CD8-positive, alpha-beta T cell (primary cell): ENCODE measurements at regions of chr5 and their contacts with region 1.

Region 1: DNA sequence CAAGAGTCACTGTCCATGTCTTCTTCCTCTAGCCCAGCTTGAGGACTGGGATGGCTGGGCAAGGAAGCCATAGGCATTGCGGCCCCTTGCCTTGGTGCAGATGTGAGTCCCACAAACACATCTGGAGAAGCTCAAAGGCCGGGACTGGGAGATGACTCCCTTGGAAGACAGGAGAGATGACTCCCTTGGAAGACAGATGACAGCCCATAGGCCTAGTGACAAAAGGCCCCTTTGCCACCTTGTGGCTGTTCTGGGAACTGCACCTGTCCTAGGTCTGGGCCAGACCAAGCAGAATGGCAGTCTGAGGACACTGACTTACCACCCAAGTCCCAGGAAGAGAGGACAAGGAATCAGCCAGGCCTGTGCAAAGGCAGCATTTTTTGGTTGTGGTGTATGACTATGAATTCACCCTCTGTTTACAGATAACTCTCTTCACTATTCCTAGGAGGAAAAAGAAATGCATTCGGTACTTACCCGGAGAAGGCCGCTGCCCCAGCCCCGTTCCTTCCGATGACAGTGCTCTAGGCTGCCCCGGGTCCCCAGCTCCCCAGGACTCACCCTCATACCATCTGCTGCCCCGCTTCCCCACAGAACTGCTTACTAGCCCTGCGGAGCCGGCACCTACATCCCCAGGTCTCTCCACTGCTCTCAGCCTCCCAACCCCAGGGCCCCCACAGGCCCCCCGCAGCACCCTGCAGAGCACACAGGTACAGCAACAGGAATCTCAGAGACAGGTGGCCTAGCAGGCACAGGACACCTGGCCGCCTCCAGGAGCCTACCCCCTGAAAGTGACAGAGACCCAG is 30.8 kb downstream of the SKP1 start:
- DNase-seq: peak; percentile 73 to 91 (median 84)
- ATAC-seq: peak; percentile 72
- H3K4me3 ChIP-seq: no peak overlapping the region
- H3K4me3 Mint-ChIP-seq: no peak overlapping the region
- H3K27ac ChIP-seq: peak overlapping the region in 1 of 2 experiments; percentile 37
- H3K27ac Mint-ChIP-seq: peak overlapping the region; percentile 83
- H3K4me1 ChIP-seq: peaks cover 22% of the 10 kb centered on the region
- H3K4me1 Mint-ChIP-seq: peaks cover 69% of the 10 kb centered on the region
- H3K27me3 ChIP-seq: no peaks in the 10 kb centered on the region
- H3K27me3 Mint-ChIP-seq: no peaks in the 10 kb centered on the region
- CTCF ChIP-seq: peak; percentile 86

Region 2: DNA sequence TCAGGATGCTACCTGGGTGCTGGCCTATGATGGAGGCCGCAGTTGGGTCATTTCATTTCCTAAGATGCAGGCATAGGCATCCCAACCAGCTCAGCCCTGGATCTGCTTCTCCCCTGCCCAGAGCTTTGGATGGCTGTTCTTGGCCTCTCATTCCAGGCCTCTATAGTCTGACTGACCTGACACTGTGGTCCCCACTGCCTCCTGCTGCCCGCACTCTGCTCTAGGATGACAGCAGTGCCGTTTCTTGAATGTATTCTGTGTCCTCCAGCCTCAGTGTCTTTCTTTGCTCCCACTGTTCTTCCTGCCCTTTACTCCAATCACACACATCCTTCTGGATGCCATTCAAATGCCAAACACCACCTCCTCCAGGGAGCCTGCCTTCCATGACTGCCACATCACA is 858.5 kb before region 1 on chr5:
- CTCF ChIA-PET with region 1: no interaction called
- POLR2A ChIA-PET with region 1: no interaction called
- intact Hi-C with region 1: no loop called
- DNase-seq: peak; percentile 5 to 70 (median 45)
- ATAC-seq: no peak
- H3K4me3 ChIP-seq: no peak overlapping the region
- H3K4me3 Mint-ChIP-seq: no peak overlapping the region
- H3K27ac ChIP-seq: no peak overlapping the region
- H3K27ac Mint-ChIP-seq: no peak overlapping the region
- H3K4me1 ChIP-seq: no peaks in the 10 kb centered on the region
- H3K4me1 Mint-ChIP-seq: no peaks in the 10 kb centered on the region
- H3K27me3 ChIP-seq: no peaks in the 10 kb centered on the region
- H3K27me3 Mint-ChIP-seq: no peaks in the 10 kb centered on the region
- CTCF ChIP-seq: peak; percentile 25

Region 3: DNA sequence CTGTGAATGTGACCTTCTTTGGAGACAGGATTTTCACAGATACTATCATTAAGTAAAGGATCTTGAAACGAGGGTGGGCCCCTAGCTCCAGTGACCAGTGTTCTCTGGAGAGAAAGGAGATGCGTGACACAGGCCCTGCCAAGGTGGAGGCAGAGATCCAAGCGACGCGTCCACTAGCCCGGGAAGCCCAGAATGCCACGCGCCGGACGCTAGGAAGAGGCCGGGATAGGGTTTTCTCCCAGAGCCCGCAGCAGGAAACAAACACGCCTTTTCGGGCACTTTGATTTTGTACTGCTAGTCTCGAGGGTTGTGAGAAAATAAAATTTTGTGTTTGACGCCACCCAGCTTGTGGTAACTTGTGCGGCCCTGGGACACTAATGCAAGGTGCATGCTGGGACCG is 111.7 kb before region 1 on chr5:
- CTCF ChIA-PET with region 1: interaction called, 773 read pairs
- POLR2A ChIA-PET with region 1: interaction called, 185 read pairs
- intact Hi-C with region 1: loop called (anchors 1 kb)
- DNase-seq: no peak
- ATAC-seq: no peak
- H3K4me3 ChIP-seq: no peak overlapping the region
- H3K4me3 Mint-ChIP-seq: no peak overlapping the region
- H3K27ac ChIP-seq: no peak overlapping the region
- H3K27ac Mint-ChIP-seq: no peak overlapping the region
- H3K4me1 ChIP-seq: peaks cover 8% of the 10 kb centered on the region
- H3K4me1 Mint-ChIP-seq: peaks cover 15% of the 10 kb centered on the region
- H3K27me3 ChIP-seq: no peaks in the 10 kb centered on the region
- H3K27me3 Mint-ChIP-seq: no peaks in the 10 kb centered on the region
- CTCF ChIP-seq: no peak

Region 4: DNA sequence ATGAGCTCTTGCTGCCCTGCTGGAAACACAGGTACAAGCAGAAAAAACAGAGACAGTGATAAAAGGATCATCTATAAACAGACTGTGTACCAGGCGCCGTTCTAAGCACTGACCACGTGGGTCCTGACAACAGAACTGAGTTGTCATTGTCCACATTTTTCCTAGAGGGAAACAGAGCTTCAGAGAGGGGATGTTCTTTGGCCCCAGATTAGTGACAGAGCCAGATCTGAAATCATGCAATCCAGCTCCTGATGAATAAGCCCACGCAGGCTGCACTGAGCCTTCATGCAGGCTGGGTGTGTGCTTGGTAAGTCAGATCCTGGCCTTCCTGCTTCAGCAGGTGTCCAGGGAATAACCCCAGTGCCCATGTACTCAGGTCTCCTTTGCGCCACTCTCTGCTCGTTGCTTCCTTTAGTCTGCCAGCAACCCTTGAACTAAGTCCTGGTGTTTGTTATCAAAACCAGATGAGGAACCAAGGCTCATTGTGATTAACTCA is 54.3 kb before region 1 on chr5:
- CTCF ChIA-PET with region 1: no interaction called
- POLR2A ChIA-PET with region 1: no interaction called
- intact Hi-C with region 1: no loop called
- DNase-seq: no peak
- ATAC-seq: no peak
- H3K4me3 ChIP-seq: no peak overlapping the region
- H3K4me3 Mint-ChIP-seq: peak overlapping the region; percentile 38
- H3K27ac ChIP-seq: peak overlapping the region in 1 of 2 experiments; percentile 52
- H3K27ac Mint-ChIP-seq: peak overlapping the region; percentile 90
- H3K4me1 ChIP-seq: peaks cover 95% of the 10 kb centered on the region
- H3K4me1 Mint-ChIP-seq: peaks cover 88% of the 10 kb centered on the region
- H3K27me3 ChIP-seq: no peaks in the 10 kb centered on the region
- H3K27me3 Mint-ChIP-seq: no peaks in the 10 kb centered on the region
- CTCF ChIP-seq: no peak

Region 5: GRCh38 chr5:134101686-134102439 is 44.1 kb before region 1 on chr5:
- CTCF ChIA-PET with region 1: no interaction called
- POLR2A ChIA-PET with region 1: no interaction called
- intact Hi-C with region 1: loop called (anchors 1 to 2 kb)
- DNase-seq: peak; percentile 68 to 90 (median 79)
- ATAC-seq: peak; percentile 30
- H3K4me3 ChIP-seq: peak overlapping the region in 1 of 2 experiments; percentile 12
- H3K4me3 Mint-ChIP-seq: peak overlapping the region; percentile 22
- H3K27ac ChIP-seq: peak overlapping the region; percentile 24 to 28
- H3K27ac Mint-ChIP-seq: peak overlapping the region; percentile 96
- H3K4me1 ChIP-seq: peaks cover 93% of the 10 kb centered on the region
- H3K4me1 Mint-ChIP-seq: peaks cover 87% of the 10 kb centered on the region
- H3K27me3 ChIP-seq: no peaks in the 10 kb centered on the region
- H3K27me3 Mint-ChIP-seq: no peaks in the 10 kb centered on the region
- CTCF ChIP-seq: peak; percentile 84

Region 6: GRCh38 chr5:134132372-134133034 is 13.5 kb before region 1 on chr5:
- CTCF ChIA-PET with region 1: no interaction called
- POLR2A ChIA-PET with region 1: no interaction called
- intact Hi-C with region 1: loop called in 1 of 2 experiments (anchors 1 kb)
- DNase-seq: peak; percentile 72 to 99 (median 85)
- ATAC-seq: peak; percentile 70
- H3K4me3 ChIP-seq: peak overlapping the region; percentile 16 to 52
- H3K4me3 Mint-ChIP-seq: peak overlapping the region; percentile 95
- H3K27ac ChIP-seq: peak overlapping the region; percentile 64 to 88
- H3K27ac Mint-ChIP-seq: peak overlapping the region; percentile 96
- H3K4me1 ChIP-seq: peaks cover 98% of the 10 kb centered on the region
- H3K4me1 Mint-ChIP-seq: peaks cover 95% of the 10 kb centered on the region
- H3K27me3 ChIP-seq: no peaks in the 10 kb centered on the region
- H3K27me3 Mint-ChIP-seq: no peaks in the 10 kb centered on the region
- CTCF ChIP-seq: peak; percentile 44

Region 7: GRCh38 chr5:134176511-134177368 is 30.8 kb after region 1 on chr5 and contains the start of gene SKP1:
- CTCF ChIA-PET with region 1: interaction called, 4 read pairs
- POLR2A ChIA-PET with region 1: interaction called, 57 read pairs
- intact Hi-C with region 1: loop called in 1 of 2 experiments (anchors 2 kb)
- DNase-seq: peak; percentile 79 to 93 (median 85)
- ATAC-seq: peak; percentile 88
- H3K4me3 ChIP-seq: peak within 1 kb of the TSS; percentile 98 to 99
- H3K4me3 Mint-ChIP-seq: peak within 1 kb of the TSS; percentile 98
- H3K27ac ChIP-seq: peak within 1 kb of the TSS; percentile 98
- H3K27ac Mint-ChIP-seq: peak within 1 kb of the TSS; percentile 99
- H3K4me1 ChIP-seq: peaks cover 31% of the 10 kb centered on the region
- H3K4me1 Mint-ChIP-seq: peaks cover 34% of the 10 kb centered on the region
- H3K27me3 ChIP-seq: no peaks in the 10 kb centered on the region
- H3K27me3 Mint-ChIP-seq: no peaks in the 10 kb centered on the region
- CTCF ChIP-seq: no peak
- total RNA-seq, gene SKP1: 290 to 301 TPM